ENCODE measurements at regions of chr11 and their contacts with region 1.

Region 1: GRCh38 chr11:67345920-67346799 is 7.2 kb downstream of the POLD4 start:
- DNase-seq: no peak
- H3K4me3 ChIP-seq: no peak overlapping the region
- CTCF ChIP-seq: peak; percentile 85

Region 2: DNA sequence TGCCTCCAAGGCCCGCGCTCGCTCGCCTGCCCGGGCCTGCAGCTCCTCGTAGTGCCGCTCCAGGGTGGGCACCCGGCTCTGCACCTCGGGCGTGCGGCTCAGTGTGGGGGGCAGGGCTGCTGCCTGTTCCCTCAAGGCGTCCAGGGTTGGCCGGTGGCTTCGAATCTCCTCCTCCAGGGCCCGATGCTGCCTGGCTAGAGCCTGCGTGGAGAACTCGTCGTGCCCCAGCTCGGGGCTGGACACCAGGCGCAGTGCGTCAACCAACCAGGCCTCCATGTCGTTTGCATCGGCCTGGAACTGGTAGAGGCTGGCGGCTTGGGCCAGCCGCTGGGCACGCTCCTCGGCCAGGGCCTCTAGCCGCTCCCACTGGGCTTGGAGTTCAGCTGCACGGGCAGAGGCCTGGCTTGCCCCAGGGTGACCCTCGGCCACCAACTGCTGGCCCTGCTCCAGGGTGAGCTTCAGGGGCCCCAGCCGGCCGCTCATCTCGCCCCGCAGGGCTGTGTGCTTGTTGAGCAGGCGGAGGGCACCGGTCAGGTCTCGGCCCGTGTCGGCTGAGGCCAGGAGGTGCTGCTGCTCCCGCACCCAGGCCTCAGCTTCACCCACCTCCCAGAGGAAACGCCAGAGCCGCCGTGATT is 641.3 kb before region 1 on chr11:
- in situ Hi-C with region 1: no loop called
- DNase-seq: no peak
- H3K4me3 ChIP-seq: no peak overlapping the region
- CTCF ChIP-seq: no peak

Region 3: GRCh38 chr11:67389477-67389876 is 43.3 kb after region 1 on chr11:
- in situ Hi-C with region 1: loop called (anchors 5 kb)
- DNase-seq: no peak
- H3K4me3 ChIP-seq: no peak overlapping the region
- CTCF ChIP-seq: peak; percentile 74

Measured in astrocyte of the cerebellum (primary cell).